ENCODE measurements at regions of chr7 and their contacts with region 1.

Region 1: GRCh38 chr7:8217200-8218068 is 44.5 kb downstream of the ICA1 start:
- DNase-seq: no peak
- H3K4me3 ChIP-seq: no peak overlapping the region
- H3K27ac ChIP-seq: no peak overlapping the region
- H3K4me1 ChIP-seq: peaks cover 0 to 33% (median 26%) of the 10 kb centered on the region in 4 donors
- H3K27me3 ChIP-seq: no peaks in the 10 kb centered on the region
- CTCF ChIP-seq: peak; percentile 44 to 76 (median 75)
- EP300 ChIP-seq: no peak
- POLR2A ChIP-seq: no peak

Region 2: GRCh38 chr7:7103343-7104313 is 1113.8 kb before region 1 on chr7:
- intact Hi-C with region 1: loop called (anchors 5 kb)
- DNase-seq: no peak
- H3K4me3 ChIP-seq: no peak overlapping the region
- H3K27ac ChIP-seq: no peak overlapping the region
- H3K4me1 ChIP-seq: peaks cover 0 to 13% (median 7%) of the 10 kb centered on the region in 4 donors
- H3K27me3 ChIP-seq: no peaks in the 10 kb centered on the region
- CTCF ChIP-seq: peak in 3 of 4 experiments; percentile 37 to 57 (median 50)
- EP300 ChIP-seq: no peak
- POLR2A ChIP-seq: no peak

Region 3: GRCh38 chr7:7424151-7424873 is 793.1 kb before region 1 on chr7:
- intact Hi-C with region 1: loop called (anchors 1 kb)
- DNase-seq: peak; percentile 71
- H3K4me3 ChIP-seq: peak overlapping the region; percentile 18 to 53 (median 44)
- H3K27ac ChIP-seq: peak overlapping the region in 1 of 4 donors; percentile 30
- H3K4me1 ChIP-seq: no peaks in the 10 kb centered on the region
- H3K27me3 ChIP-seq: no peaks in the 10 kb centered on the region
- CTCF ChIP-seq: peak; percentile 54 to 67 (median 62)
- EP300 ChIP-seq: no peak
- POLR2A ChIP-seq: no peak

Region 4: GRCh38 chr7:7681179-7681935 is 536.1 kb before region 1 on chr7:
- intact Hi-C with region 1: loop called (anchors 5 kb)
- DNase-seq: no peak
- H3K4me3 ChIP-seq: peak overlapping the region in 2 of 4 donors; percentile 13 to 18
- H3K27ac ChIP-seq: peak overlapping the region in 3 of 4 donors; percentile 33 to 47 (median 43)
- H3K4me1 ChIP-seq: peaks cover 0 to 19% (median 16%) of the 10 kb centered on the region in 4 donors
- H3K27me3 ChIP-seq: no peaks in the 10 kb centered on the region
- CTCF ChIP-seq: peak; percentile 29 to 66 (median 62)
- EP300 ChIP-seq: no peak
- POLR2A ChIP-seq: no peak

Region 5: GRCh38 chr7:7911371-7912155 is 305.9 kb before region 1 on chr7:
- intact Hi-C with region 1: no loop called
- DNase-seq: no peak
- H3K4me3 ChIP-seq: no peak overlapping the region
- H3K27ac ChIP-seq: no peak overlapping the region
- H3K4me1 ChIP-seq: peaks cover 0 to 15% (median 9%) of the 10 kb centered on the region in 4 donors
- H3K27me3 ChIP-seq: no peaks in the 10 kb centered on the region
- CTCF ChIP-seq: no peak
- EP300 ChIP-seq: no peak
- POLR2A ChIP-seq: no peak

Region 6: DNA sequence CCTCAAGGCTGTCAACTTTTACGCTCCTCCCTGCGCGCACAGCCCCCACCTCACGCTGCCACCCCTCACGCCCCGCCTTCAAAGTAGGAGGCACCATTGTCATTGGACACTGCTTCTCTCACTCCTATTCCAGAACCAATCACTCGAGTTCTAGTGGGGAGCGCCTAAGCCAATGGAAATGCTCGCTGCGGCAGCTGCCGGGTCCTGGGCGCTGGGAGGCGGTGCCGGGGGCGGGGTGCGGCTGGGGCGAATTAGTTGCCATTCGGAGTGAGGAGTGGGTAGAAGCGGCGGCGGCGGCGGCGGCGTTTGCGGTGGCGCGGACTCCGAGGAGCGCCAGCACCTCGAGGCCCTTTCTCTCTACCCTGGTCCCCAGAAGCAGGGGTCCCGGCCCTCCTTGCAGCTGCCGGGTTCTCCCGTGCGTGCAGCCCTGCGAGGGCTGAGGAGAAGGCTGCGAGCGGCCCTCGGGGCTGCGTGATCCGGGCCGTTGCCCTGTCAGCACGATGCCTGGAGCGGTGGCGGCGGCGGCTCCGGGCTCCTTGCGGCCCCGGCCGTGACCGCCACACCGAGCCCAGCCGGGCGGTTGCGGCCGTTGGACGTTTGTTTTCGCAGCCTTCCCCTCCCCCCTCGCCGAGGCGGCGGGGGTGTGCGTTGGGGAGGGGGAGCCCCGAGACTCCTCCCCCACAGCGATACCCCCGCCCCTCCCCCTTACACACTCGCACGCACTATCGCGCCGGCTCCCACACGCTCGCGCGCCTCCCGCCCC is 248.7 kb before region 1 on chr7 and contains the start of gene GLCCI1:
- intact Hi-C with region 1: loop called (anchors 2 kb)
- DNase-seq: peak; percentile 98
- H3K4me3 ChIP-seq: peak within 1 kb of the TSS; percentile 87 to 95 (median 92)
- H3K27ac ChIP-seq: peak within 1 kb of the TSS; percentile 89 to 99 (median 97)
- H3K4me1 ChIP-seq: peaks cover 0 to 18% (median 7%) of the 10 kb centered on the region in 4 donors
- H3K27me3 ChIP-seq: no peaks in the 10 kb centered on the region
- CTCF ChIP-seq: no peak
- EP300 ChIP-seq: no peak
- POLR2A ChIP-seq: peak; percentile 58 to 79
- total RNA-seq, gene GLCCI1: 3.8 to 17.7 (median 10.6) TPM

Region 7: GRCh38 chr7:8073700-8074099 is 143.7 kb before region 1 on chr7:
- intact Hi-C with region 1: no loop called
- DNase-seq: no peak
- H3K4me3 ChIP-seq: no peak overlapping the region
- H3K27ac ChIP-seq: no peak overlapping the region
- H3K4me1 ChIP-seq: no peaks in the 10 kb centered on the region
- H3K27me3 ChIP-seq: no peaks in the 10 kb centered on the region
- CTCF ChIP-seq: no peak
- EP300 ChIP-seq: no peak
- POLR2A ChIP-seq: no peak

Region 8: GRCh38 chr7:8274589-8274988 is 57.2 kb after region 1 on chr7:
- intact Hi-C with region 1: no loop called
- DNase-seq: no peak
- H3K4me3 ChIP-seq: no peak overlapping the region
- H3K27ac ChIP-seq: no peak overlapping the region
- H3K4me1 ChIP-seq: no peaks in the 10 kb centered on the region
- H3K27me3 ChIP-seq: no peaks in the 10 kb centered on the region
- CTCF ChIP-seq: no peak
- EP300 ChIP-seq: no peak
- POLR2A ChIP-seq: no peak

Measured in sigmoid colon (tissue), 7 donors.